ENCODE measurements at regions of chr17 and their contacts with region 1.

Region 1: DNA sequence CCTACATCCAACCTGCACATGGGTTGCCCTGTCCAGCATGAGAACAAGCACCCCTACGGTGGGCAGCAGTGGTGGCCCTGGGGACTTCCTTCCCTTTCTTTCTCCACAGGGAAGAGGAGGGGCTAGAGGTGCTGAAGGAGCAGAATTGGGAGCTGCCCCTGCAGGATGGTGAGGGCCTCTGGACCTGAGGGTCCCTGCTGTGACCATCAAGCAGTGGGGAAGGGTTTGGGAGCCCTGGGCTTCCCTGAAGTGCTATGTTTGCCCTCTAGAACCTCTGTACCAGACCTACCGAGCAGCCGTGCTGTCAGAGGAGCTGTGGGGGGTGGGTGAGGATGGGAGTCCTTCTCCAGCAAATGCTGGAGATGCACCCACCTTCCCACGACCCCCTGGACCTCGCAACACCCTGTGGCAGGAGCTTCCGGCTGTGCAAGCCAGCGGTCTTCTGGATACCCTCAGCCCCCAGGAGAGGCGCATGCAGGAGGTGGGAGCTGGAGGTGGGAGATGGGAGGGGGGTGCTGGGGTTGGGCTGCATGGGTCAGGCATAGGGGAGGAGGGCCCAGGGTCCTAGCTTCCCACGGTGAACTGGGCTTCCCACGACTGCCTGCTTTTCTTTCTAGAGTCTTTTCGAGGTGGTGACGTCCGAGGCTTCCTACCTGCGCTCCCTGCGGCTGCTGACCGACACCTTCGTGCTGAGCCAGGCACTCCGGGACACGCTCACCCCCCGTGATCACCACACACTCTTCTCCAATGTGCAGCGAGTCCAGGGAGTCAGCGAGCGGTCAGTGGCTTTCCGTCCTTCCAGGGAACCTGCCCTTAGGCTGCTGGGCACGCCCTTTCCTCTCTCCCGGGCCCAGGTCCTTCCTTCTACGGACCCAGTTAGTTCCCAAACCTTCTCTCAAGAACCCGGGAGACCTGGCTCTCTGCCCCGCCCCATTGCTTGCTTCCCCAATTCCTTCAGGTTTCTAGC is 5.0 kb downstream of the ARHGEF15 start:
- DNase-seq: no peak
- ATAC-seq: no peak
- H3K4me3 ChIP-seq: peak overlapping the region in 8 of 12 donors; percentile 0 to 26 (median 6)
- H3K27ac ChIP-seq: no peak overlapping the region
- H3K4me1 ChIP-seq: peaks cover 0 to 36% (median 17%) of the 10 kb centered on the region in 12 donors
- H3K27me3 ChIP-seq: peaks cover 3 to 50% (median 9%) of the 10 kb centered on the region in 9 donors
- CTCF ChIP-seq: no peak
- POLR2A ChIP-seq: no peak

Region 2: GRCh38 chr17:8326511-8327302 is 11.6 kb after region 1 on chr17:
- intact Hi-C with region 1: loop called in 1 of 10 experiments (anchors 2 kb)
- DNase-seq: peak; percentile 47 to 73 (median 57)
- ATAC-seq: peak; percentile 28 to 75 (median 73)
- H3K4me3 ChIP-seq: peak overlapping the region; percentile 32 to 72 (median 62)
- H3K27ac ChIP-seq: peak overlapping the region; percentile 49 to 88 (median 80)
- H3K4me1 ChIP-seq: peaks cover 0 to 36% (median 22%) of the 10 kb centered on the region in 12 donors
- H3K27me3 ChIP-seq: peaks cover 0 to 19% (median 0%) of the 10 kb centered on the region in 9 donors
- CTCF ChIP-seq: peak in 1 of 12 donors; percentile 3
- POLR2A ChIP-seq: no peak

Region 3: DNA sequence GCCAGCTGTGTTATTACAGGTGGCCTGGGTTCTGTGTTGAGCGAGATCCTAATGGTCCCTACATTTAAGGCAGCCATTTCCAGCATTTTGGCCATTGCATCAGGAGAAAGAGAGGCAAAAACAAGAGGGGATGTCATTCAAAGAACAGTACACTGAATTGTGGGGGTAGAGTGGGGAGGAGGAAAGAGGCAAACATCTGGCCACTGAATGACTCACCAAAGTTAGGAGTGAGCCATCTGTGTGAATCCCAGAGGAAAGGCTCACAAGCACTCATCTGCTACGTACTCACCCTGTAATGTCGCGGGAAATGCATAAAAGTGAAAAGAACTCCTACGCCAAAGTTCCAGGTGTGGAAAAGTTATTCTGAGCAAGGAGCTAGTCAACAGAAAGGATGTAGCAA is 44.7 kb after region 1 on chr17:
- intact Hi-C with region 1: loop called in 2 of 10 experiments (anchors 5 kb)
- DNase-seq: peak in 1 of 5 donors; percentile 39
- ATAC-seq: peak; percentile 60 to 95 (median 90)
- H3K4me3 ChIP-seq: peak overlapping the region in 2 of 12 donors; percentile 2 to 4
- H3K27ac ChIP-seq: peak overlapping the region; percentile 37 to 89 (median 70)
- H3K4me1 ChIP-seq: peaks cover 0 to 53% (median 27%) of the 10 kb centered on the region in 12 donors
- H3K27me3 ChIP-seq: no peaks in the 10 kb centered on the region
- CTCF ChIP-seq: no peak
- POLR2A ChIP-seq: no peak

Region 4: GRCh38 chr17:8366231-8366630 is 51.2 kb after region 1 on chr17:
- intact Hi-C with region 1: loop called in 5 of 10 experiments (anchors 5 to 10 kb)
- DNase-seq: no peak
- ATAC-seq: peak; percentile 17 to 67 (median 64)
- H3K4me3 ChIP-seq: no peak overlapping the region
- H3K27ac ChIP-seq: peak overlapping the region; percentile 15 to 76 (median 62)
- H3K4me1 ChIP-seq: peaks cover 0 to 54% (median 30%) of the 10 kb centered on the region in 12 donors
- H3K27me3 ChIP-seq: no peaks in the 10 kb centered on the region
- CTCF ChIP-seq: no peak
- POLR2A ChIP-seq: no peak

Region 5: GRCh38 chr17:8376271-8377067 is 61.4 kb after region 1 on chr17 and contains the start of gene KRABD2:
- intact Hi-C with region 1: loop called in 6 of 10 experiments (anchors 5 to 10 kb)
- DNase-seq: peak; percentile 93 to 96 (median 95)
- ATAC-seq: peak; percentile 92 to 98 (median 97)
- H3K4me3 ChIP-seq: peak within 1 kb of the TSS; percentile 40 to 97 (median 81)
- H3K27ac ChIP-seq: peak within 1 kb of the TSS; percentile 69 to 98 (median 93)
- H3K4me1 ChIP-seq: peaks cover 0 to 52% (median 35%) of the 10 kb centered on the region in 12 donors
- H3K27me3 ChIP-seq: no peaks in the 10 kb centered on the region
- CTCF ChIP-seq: peak; percentile 35 to 86 (median 51)
- POLR2A ChIP-seq: peak in 1 of 2 donors; percentile 82

Region 6: GRCh38 chr17:8383143-8383822 is 68.2 kb after region 1 on chr17 and contains the start of gene RPL26:
- intact Hi-C with region 1: loop called in 6 of 10 experiments (anchors 5 to 10 kb)
- DNase-seq: peak; percentile 95 to 97 (median 96)
- ATAC-seq: peak; percentile 89 to 97 (median 92)
- H3K4me3 ChIP-seq: peak within 1 kb of the TSS; percentile 40 to 77 (median 70)
- H3K27ac ChIP-seq: peak within 1 kb of the TSS; percentile 12 to 93 (median 80)
- H3K4me1 ChIP-seq: peaks cover 0 to 51% (median 29%) of the 10 kb centered on the region in 12 donors
- H3K27me3 ChIP-seq: no peaks in the 10 kb centered on the region
- CTCF ChIP-seq: peak; percentile 96 to 99 (median 98)
- POLR2A ChIP-seq: peak in 1 of 2 donors; percentile 73
- total RNA-seq, gene RPL26: 967 to 1,970 (median 1,265) TPM

Measured in heart left ventricle (tissue), 16 donors.